ENCODE measurements at regions of chr1 and their contacts with region 1.

Region 1: DNA sequence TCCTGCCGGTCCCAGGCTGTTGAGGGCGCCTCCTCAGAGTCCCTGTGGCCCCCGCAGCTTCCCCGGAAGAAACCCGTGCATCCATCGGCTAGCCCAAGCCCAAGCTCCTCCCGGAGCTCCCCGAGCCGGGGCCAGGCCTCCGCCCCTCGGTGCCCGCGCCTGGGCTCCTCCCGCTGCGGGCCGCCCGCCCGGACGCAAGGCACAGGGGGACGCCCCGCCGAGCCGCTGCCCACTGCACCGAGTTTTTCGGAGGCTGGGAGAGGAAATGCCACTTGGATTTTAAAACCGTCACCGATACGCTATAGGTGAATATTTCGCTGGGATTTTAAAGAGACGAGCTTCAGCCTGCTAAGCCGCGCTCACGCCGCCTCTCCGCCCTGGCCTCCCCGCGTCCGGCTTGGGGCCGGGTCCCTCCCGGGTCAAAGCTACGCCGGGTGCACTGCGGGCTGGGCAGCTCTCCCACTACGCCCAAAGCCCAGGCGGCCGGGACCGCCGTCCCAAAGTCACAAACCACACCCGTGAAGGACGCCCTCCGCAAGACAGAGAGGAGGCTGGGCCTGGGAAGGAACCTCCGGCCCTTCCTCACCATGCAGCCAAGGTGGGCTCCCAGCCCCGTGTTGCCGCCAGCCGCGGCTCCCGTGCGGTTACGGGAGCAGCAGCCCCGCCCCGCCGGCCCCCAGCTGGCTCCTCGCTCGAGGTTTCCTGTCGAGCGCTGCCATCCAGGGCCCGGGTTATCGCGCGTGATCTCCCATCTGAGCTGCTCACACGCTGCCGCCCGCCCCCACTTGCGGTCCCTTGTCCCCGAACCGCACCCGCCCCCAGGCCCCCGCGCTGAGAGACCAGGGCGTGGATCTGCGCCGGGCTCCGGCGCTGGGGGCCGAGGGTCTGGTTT is 63.2 kb downstream of the CD247 start:
- DNase-seq: peak; percentile 94
- H3K4me3 Mint-ChIP-seq: peak overlapping the region; percentile 86
- H3K27ac Mint-ChIP-seq: peak overlapping the region; percentile 77
- H3K4me1 Mint-ChIP-seq: peaks cover 50% of the 10 kb centered on the region
- H3K27me3 Mint-ChIP-seq: no peaks in the 10 kb centered on the region

Region 2: GRCh38 chr1:167420510-167420909 is 34.6 kb before region 1 on chr1:
- intact Hi-C with region 1: no loop called
- DNase-seq: no peak
- H3K4me3 Mint-ChIP-seq: no peak overlapping the region
- H3K27ac Mint-ChIP-seq: no peak overlapping the region
- H3K4me1 Mint-ChIP-seq: no peaks in the 10 kb centered on the region
- H3K27me3 Mint-ChIP-seq: no peaks in the 10 kb centered on the region

Region 3: DNA sequence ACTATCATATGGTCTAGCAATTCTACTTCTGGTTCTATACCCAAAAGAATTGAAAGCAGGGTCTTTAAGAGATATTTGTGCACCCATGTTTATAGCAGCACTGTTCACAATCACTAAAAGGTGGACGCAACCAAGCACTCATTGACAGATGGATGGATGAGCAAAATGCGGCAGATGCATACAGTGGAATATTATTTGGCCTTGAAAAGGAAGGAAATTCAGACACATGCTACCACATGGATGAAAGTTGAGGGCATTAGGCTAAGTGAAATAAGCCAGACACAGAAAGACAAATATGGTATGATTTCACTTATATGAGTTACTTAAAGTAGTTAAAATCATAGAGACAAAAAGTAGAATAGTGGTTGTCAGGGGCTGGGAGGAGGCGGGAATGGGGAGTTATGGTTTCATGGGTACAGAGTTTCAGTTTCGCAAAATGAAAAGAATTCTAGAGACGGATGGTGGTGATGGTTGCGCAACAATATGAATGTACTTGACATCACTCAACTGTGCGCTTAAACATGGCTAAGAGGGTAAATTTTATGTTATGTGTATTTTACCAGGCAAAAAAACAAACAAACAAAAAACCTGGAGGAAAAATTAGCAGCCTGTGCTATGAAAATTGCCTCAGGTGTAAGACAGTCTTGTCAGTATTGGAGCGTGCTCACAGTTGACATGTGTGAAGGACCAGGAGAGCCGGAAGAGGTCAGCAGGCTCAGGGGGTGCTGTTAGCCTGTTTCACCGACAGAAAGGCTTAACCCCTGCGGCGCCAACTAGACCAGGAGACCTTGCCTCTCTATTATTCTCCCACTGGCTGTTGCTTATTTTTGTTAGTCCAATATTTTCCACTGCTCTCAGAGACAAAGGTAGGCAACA is 36.7 kb after region 1 on chr1:
- intact Hi-C with region 1: loop called (anchors 1 kb)
- DNase-seq: peak; percentile 83
- H3K4me3 Mint-ChIP-seq: peak overlapping the region; percentile 79
- H3K27ac Mint-ChIP-seq: peak overlapping the region; percentile 94
- H3K4me1 Mint-ChIP-seq: peaks cover 84% of the 10 kb centered on the region
- H3K27me3 Mint-ChIP-seq: no peaks in the 10 kb centered on the region

Region 4: DNA sequence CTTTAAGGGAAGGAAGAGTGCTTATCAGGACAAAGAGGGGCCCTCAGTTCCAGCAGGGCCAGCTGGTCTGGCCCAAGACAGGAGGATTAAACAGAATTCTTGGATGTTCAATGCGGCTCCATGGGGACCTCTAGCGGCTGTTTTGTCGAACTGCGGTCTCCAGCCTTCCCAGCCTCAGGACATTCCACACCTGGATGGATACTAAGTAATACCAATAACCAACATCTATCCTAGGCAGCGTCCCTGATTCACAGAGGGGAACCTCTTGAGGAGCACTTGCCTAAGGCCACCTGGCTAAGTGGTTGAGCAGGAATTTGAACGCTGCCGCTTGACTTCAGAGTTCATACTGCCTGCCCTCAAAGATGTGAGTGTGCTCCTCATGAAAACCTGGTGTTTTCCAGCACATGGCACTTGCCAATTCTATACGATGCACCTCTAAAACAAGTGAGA is 78.7 kb after region 1 on chr1:
- intact Hi-C with region 1: loop called (anchors 2 kb)
- DNase-seq: peak; percentile 89
- H3K4me3 Mint-ChIP-seq: no peak overlapping the region
- H3K27ac Mint-ChIP-seq: no peak overlapping the region
- H3K4me1 Mint-ChIP-seq: peaks cover 7% of the 10 kb centered on the region
- H3K27me3 Mint-ChIP-seq: peaks cover 1% of the 10 kb centered on the region

Region 5: DNA sequence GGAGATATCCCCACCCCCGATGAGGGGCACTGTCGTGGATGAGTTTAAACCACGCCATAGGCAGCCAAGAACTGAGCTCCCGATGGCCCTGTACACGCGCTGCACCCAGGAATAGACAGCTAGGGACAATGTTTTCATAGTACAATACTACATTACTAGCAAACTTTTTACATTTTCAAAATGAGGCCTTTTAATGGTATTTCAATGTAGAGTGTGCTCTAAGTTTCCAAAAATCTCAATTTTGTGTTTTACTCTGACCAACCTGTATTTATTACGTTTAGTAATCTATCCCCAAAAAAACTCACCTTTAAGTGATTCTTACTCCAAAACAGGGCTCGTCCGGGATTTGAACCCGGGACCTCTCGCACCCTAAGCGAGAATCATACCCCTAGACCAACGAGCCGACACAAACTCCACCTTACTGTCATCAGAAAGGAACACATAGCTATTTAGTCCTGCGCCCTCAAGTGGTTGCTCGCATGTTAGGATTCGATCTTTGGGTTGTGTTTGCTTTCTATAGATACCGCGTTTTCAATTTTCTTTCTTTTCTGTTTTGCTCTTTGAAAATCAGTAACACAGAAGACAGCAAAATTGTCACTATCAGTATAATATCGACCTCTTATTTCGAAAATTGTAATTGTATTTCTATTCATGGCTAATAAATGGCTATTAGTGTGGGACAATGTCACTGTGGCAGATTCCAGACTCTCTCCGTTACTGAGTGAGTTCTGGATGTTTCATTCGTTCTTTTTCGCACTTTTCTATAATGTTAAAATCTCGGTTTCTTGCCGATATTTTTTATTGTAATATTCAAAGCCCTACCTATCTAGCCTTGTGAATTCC is 260.2 kb after region 1 on chr1:
- intact Hi-C with region 1: loop called (anchors 5 kb)
- DNase-seq: peak; percentile 97
- H3K4me3 Mint-ChIP-seq: peak overlapping the region; percentile 96
- H3K27ac Mint-ChIP-seq: peak overlapping the region; percentile 98
- H3K4me1 Mint-ChIP-seq: peaks cover 56% of the 10 kb centered on the region
- H3K27me3 Mint-ChIP-seq: peaks cover 13% of the 10 kb centered on the region

Measured in activated CD4-positive, alpha-beta T cell treated with anti-CD3 and anti-CD28 coated beads, Interleukin-2, amount 10 ng/mL, durations not matched to agents 24 days and 14 days (primary cell).